ENCODE measurements at regions of chr2 and their contacts with region 1.

Region 1: DNA sequence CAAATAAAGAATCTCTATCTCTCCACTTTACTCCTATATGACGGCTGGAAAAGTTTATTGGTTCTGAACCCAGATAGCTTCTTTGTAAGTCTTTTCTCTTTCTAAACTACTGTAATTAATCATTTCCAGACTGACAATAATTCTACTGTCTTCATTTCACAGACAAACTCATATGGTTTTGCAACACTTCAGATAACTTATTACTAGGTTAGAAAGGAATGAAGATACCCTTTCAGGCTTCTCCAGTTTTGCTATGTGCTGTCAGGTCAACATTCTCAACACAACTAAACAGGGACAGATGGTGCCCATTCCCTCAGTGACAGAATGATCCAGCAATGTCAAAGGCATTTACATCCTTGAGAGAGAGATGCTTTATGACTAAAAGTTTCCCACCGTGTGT is 198.5 kb upstream of the ITGA4 start:
- DNase-seq: no peak
- H3K4me3 ChIP-seq: no peak overlapping the region
- H3K4me3 Mint-ChIP-seq: no peak overlapping the region
- H3K27ac ChIP-seq: no peak overlapping the region
- H3K27ac Mint-ChIP-seq: no peak overlapping the region
- H3K4me1 ChIP-seq: peaks cover 21 to 30% of the 10 kb centered on the region in 2 donors
- H3K4me1 Mint-ChIP-seq: peaks cover 32% of the 10 kb centered on the region
- H3K27me3 ChIP-seq: no peaks in the 10 kb centered on the region
- H3K27me3 Mint-ChIP-seq: no peaks in the 10 kb centered on the region
- CTCF ChIP-seq: no peak

Region 2: GRCh38 chr2:181305301-181306123 is 46.8 kb after region 1 on chr2:
- intact Hi-C with region 1: loop called in 1 of 2 experiments (anchors 10 kb)
- DNase-seq: peak; percentile 24 to 66 (median 32)
- H3K4me3 ChIP-seq: peak overlapping the region in 2 of 3 experiments; percentile 19 to 33
- H3K4me3 Mint-ChIP-seq: peak overlapping the region; percentile 47 to 51
- H3K27ac ChIP-seq: peak overlapping the region; percentile 62 to 90
- H3K27ac Mint-ChIP-seq: peak overlapping the region; percentile 89 to 95 (median 94)
- H3K4me1 ChIP-seq: peaks cover 54 to 71% of the 10 kb centered on the region in 2 donors
- H3K4me1 Mint-ChIP-seq: peaks cover 71% of the 10 kb centered on the region
- H3K27me3 ChIP-seq: no peaks in the 10 kb centered on the region
- H3K27me3 Mint-ChIP-seq: no peaks in the 10 kb centered on the region
- CTCF ChIP-seq: no peak

Measured in CD14-positive monocyte (primary cell).